Breast epithelium (tissue), 4 donors: ENCODE measurements at regions of chr9 and their contacts with region 1.

Region 1: DNA sequence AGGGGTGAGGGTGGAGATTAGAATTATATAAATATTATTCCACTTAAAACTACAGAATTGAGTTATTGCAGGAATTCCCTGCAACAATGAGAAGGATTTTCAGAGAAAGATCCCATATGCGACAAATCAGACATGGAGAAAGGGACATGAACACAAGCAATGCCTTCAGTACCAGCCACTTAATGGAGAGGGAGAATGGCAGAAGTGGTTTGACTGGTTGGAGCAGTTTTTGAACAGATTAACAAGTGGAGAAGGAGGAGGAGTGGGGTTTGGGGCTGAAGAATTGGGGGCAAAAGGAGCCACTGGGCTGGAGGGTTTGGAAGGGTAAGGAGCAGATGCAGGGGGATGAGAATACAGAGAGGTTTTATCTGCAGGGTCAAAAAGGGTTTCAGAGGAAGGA is 620.9 kb upstream of the PTPRD start:
- DNase-seq: no peak
- H3K4me3 ChIP-seq: no peak overlapping the region
- H3K27ac ChIP-seq: no peak overlapping the region
- H3K4me1 ChIP-seq: no peaks in the 10 kb centered on the region
- H3K27me3 ChIP-seq: no peaks in the 10 kb centered on the region
- CTCF ChIP-seq: no peak
- POLR2A ChIP-seq: no peak

Region 2: GRCh38 chr9:10434412-10434811 is 799.3 kb before region 1 on chr9:
- intact Hi-C with region 1: loop called (anchors 10 kb)
- DNase-seq: no peak
- H3K4me3 ChIP-seq: no peak overlapping the region
- H3K27ac ChIP-seq: no peak overlapping the region
- H3K4me1 ChIP-seq: no peaks in the 10 kb centered on the region
- H3K27me3 ChIP-seq: peaks cover 0 to 3% of the 10 kb centered on the region in 2 donors
- CTCF ChIP-seq: no peak
- POLR2A ChIP-seq: no peak

Region 3: DNA sequence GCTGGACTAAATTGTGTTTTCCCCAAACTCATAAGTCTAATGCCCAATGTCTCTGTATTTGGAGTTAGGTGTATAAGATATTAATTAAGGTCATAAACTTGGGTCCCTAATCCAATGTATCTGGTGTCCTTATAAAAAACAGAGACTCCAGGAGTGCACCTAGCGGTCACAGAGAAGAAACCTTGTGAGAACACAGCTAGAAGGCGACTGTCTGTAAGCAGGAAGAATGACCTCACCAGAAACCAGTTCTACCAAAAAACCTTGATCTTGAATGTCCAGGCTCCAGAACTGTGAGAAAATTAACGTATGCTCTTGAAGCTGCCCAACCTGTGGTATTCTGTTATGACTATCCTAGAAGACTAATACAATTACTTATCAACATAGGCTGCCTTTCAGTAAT is 29.2 kb before region 1 on chr9:
- intact Hi-C with region 1: no loop called
- DNase-seq: no peak
- H3K4me3 ChIP-seq: no peak overlapping the region
- H3K27ac ChIP-seq: no peak overlapping the region
- H3K4me1 ChIP-seq: no peaks in the 10 kb centered on the region
- H3K27me3 ChIP-seq: no peaks in the 10 kb centered on the region
- CTCF ChIP-seq: no peak
- POLR2A ChIP-seq: no peak

Region 4: DNA sequence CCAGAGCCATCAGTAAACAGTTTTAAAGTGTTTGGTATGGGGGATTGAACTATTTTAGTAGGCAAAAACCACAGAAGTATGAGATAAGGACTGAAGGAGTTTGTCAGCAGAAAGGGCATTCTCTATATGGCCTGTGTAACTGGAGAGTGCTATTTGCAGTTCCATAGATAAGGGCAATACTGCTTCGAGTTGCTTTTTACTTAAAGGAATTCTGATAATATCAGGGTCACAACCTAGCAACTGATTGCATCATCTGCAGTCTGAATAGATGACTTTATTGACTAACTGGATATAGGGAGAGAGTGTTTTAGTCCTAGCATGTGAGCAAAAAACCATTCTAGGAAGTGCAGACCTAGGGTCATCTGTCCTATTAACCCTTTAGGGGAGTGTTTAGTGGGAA is 24.3 kb after region 1 on chr9:
- intact Hi-C with region 1: no loop called
- DNase-seq: no peak
- H3K4me3 ChIP-seq: no peak overlapping the region
- H3K27ac ChIP-seq: no peak overlapping the region
- H3K4me1 ChIP-seq: no peaks in the 10 kb centered on the region
- H3K27me3 ChIP-seq: no peaks in the 10 kb centered on the region
- CTCF ChIP-seq: no peak
- POLR2A ChIP-seq: no peak